ENCODE measurements at regions of chr12 and their contacts with region 1.

Region 1: GRCh38 chr12:7907009-7907408 is 29.0 kb downstream of the SLC2A3 start:
- DNase-seq: peak; percentile 61
- ATAC-seq: peak; percentile 73
- H3K4me3 ChIP-seq: no peak overlapping the region
- H3K27ac ChIP-seq: no peak overlapping the region
- H3K4me1 ChIP-seq: no peaks in the 10 kb centered on the region
- H3K27me3 ChIP-seq: no peaks in the 10 kb centered on the region
- CTCF ChIP-seq: peak; percentile 52
- POLR2A ChIP-seq: no peak
- RAD21 ChIP-seq: peak; percentile 25

Region 2: DNA sequence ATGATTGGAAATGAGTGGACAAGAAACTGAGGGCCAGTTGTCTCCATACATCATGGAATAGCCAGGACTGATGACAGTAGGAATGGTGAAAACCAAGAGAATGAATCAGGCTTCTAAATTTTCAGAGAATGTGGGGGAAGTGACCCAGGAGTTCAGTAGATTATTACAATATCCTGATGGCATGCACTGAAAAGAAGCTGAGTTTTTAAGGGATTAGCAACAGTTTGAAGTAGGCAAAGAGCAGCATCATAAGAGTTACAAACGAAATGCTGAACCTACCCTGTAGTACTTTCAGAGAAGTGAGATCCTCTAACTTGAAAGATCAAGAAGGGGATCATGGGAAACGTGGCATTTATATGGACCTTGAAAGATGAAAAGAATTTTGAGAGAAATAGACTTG is 47.5 kb before region 1 on chr12:
- CTCF ChIA-PET with region 1: no interaction called
- POLR2A ChIA-PET with region 1: no interaction called
- dilution Hi-C with region 1: no loop called
- in situ Hi-C with region 1: no loop called
- intact Hi-C with region 1: loop called (anchors 1 kb)
- DNase-seq: peak; percentile 81
- ATAC-seq: peak; percentile 58
- H3K4me3 ChIP-seq: no peak overlapping the region
- H3K27ac ChIP-seq: peak overlapping the region; percentile 43
- H3K4me1 ChIP-seq: peaks cover 3% of the 10 kb centered on the region
- H3K27me3 ChIP-seq: no peaks in the 10 kb centered on the region
- CTCF ChIP-seq: no peak
- POLR2A ChIP-seq: no peak
- RAD21 ChIP-seq: no peak

Region 3: DNA sequence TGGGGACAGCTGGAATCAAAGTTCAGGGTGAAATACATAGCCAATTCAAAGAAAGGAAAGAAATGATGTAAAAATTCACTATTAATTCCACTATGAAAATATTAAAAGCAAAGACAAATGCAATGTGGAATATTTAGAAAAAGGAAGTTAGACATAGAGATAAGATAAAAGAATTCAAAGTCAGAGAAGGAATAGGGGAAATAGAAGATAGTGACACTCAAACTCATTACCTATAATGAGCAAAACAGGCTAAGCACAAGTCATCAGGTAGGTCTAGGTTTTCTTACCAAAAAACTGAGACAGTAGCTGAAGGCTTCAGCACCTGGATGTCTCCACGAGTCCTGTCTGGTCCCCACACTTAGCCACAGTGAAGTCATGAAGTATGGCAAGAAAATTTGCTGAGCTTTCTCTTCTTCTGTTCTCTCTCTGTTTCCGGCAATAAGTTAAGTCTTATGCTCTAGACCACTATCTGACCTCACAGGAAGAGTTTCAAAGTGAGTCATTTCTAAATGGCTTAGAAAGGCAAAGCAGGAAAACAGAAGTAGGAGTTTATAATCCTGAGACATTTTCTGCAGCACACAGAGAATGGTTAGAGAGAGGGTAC is 159.1 kb after region 1 on chr12 and contains the start of gene C3AR1:
- CTCF ChIA-PET with region 1: no interaction called
- POLR2A ChIA-PET with region 1: no interaction called
- dilution Hi-C with region 1: no loop called
- in situ Hi-C with region 1: no loop called
- intact Hi-C with region 1: loop called (anchors 1 kb)
- DNase-seq: peak; percentile 79
- ATAC-seq: peak; percentile 91
- H3K4me3 ChIP-seq: no peak within 1 kb of the TSS
- H3K27ac ChIP-seq: no peak within 1 kb of the TSS
- H3K4me1 ChIP-seq: peaks cover 2% of the 10 kb centered on the region; the same call in 1 of the 2 replicates
- H3K27me3 ChIP-seq: no peaks in the 10 kb centered on the region
- CTCF ChIP-seq: no peak
- POLR2A ChIP-seq: no peak
- RAD21 ChIP-seq: no peak
- total RNA-seq, gene C3AR1: 0.28 and 0.36 TPM in 2 replicates

Measured in IMR-90 (cell line).